Tibial artery (tissue), 4 donors: ENCODE measurements at regions of chr16 and their contacts with region 1.

Region 1: GRCh38 chr16:79601931-79602627 is 1.5 kb upstream of the MAF start:
- DNase-seq: peak; percentile 83 to 85
- H3K4me3 ChIP-seq: peak overlapping the region; percentile 63 to 78
- H3K27ac ChIP-seq: peak overlapping the region; percentile 83 to 91
- H3K4me1 ChIP-seq: peaks cover 0 to 18% (median 2%) of the 10 kb centered on the region in 4 donors
- H3K27me3 ChIP-seq: no peaks in the 10 kb centered on the region
- CTCF ChIP-seq: peak; percentile 70 to 73

Region 2: DNA sequence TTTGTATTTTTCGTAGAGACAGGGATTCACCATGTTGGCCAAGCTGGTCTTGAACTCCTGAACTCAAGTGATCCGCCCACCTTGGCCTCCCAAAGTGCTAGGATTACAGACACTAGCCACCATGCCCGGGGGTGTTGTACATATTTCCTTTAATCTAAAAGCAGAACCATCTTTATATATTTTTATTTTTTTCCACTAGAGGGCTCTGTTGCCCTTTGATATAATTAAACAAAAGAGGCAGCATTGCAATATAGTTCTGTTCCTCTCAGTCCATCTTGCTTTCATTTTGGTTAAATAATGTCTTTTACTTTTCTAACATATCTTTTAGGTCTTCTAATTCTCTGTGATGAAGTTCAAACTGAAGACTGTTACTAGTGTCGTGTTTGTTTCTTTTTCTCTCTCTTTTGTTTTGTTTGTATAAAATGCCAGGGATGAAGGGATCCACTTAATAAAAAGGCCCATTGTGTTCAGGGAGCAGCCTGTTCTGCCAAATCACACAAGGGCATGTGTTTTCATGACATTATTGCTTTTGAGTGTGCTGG is 1479.2 kb before region 1 on chr16:
- intact Hi-C with region 1: loop called (anchors 10 kb)
- DNase-seq: no peak
- H3K4me3 ChIP-seq: peak overlapping the region in 1 of 2 donors; percentile 17
- H3K27ac ChIP-seq: peak overlapping the region; percentile 39 to 51
- H3K4me1 ChIP-seq: peaks cover 0 to 17% (median 12%) of the 10 kb centered on the region in 4 donors
- H3K27me3 ChIP-seq: no peaks in the 10 kb centered on the region
- CTCF ChIP-seq: peak; percentile 46 to 68

Region 3: DNA sequence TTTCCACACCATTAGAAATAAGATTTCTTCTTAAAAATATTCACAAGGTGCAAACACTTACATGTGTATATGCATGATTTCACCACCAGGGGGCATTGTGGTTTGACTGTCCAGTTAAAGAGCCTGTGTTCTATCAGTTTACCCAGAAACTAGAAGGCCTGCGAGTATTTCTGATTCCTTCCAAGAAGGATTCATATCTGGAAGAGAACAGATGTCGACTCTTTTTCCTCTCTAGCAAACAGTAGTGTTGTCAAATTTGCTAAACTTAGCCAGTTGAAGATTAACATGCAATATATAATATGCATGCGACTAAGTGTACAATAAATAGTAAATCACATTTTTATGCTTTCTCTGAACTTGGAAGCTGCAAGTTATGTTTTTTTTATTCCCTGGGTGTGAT is 1098.5 kb before region 1 on chr16:
- intact Hi-C with region 1: loop called (anchors 5 kb)
- DNase-seq: peak in 1 of 2 donors; percentile 41
- H3K4me3 ChIP-seq: no peak overlapping the region
- H3K27ac ChIP-seq: no peak overlapping the region
- H3K4me1 ChIP-seq: peaks cover 0 to 28% (median 18%) of the 10 kb centered on the region in 4 donors
- H3K27me3 ChIP-seq: no peaks in the 10 kb centered on the region
- CTCF ChIP-seq: peak; percentile 70 to 89

Region 4: DNA sequence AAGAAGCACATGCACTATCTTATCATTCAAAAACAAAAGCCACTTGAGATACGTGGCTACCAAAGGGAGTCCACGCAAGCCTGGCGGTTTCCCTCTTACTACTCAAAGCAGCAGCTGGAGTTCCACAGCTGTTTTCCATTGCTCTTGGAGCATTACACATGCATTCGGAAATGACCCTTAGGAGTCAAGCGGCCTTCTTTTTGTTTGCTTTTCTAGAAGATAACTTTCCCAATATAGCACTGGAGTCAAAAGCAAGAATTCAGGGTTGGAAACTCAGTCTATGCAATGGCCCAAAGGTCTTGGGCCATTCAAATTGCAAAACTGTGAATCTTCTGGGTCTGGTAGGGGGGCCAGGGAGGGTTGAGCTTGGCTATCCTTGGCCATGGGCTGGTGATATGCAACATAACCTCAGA is 96.3 kb after region 1 on chr16:
- intact Hi-C with region 1: no loop called
- DNase-seq: peak in 1 of 2 donors; percentile 50
- H3K4me3 ChIP-seq: no peak overlapping the region
- H3K27ac ChIP-seq: peak overlapping the region in 1 of 2 donors; percentile 10
- H3K4me1 ChIP-seq: peaks cover 0 to 20% (median 9%) of the 10 kb centered on the region in 4 donors
- H3K27me3 ChIP-seq: no peaks in the 10 kb centered on the region
- CTCF ChIP-seq: no peak

Region 5: GRCh38 chr16:79713609-79714309 is 111.7 kb after region 1 on chr16:
- intact Hi-C with region 1: loop called (anchors 5 kb)
- DNase-seq: no peak
- H3K4me3 ChIP-seq: no peak overlapping the region
- H3K27ac ChIP-seq: peak overlapping the region; percentile 70 to 83
- H3K4me1 ChIP-seq: peaks cover 5 to 60% (median 41%) of the 10 kb centered on the region in 4 donors
- H3K27me3 ChIP-seq: no peaks in the 10 kb centered on the region
- CTCF ChIP-seq: no peak

Region 6: GRCh38 chr16:79767421-79768275 is 165.6 kb after region 1 on chr16:
- intact Hi-C with region 1: loop called (anchors 5 kb)
- DNase-seq: peak in 1 of 2 donors; percentile 19
- H3K4me3 ChIP-seq: peak overlapping the region; percentile 41 to 44
- H3K27ac ChIP-seq: peak overlapping the region; percentile 73 to 79
- H3K4me1 ChIP-seq: peaks cover 0 to 32% (median 18%) of the 10 kb centered on the region in 4 donors
- H3K27me3 ChIP-seq: no peaks in the 10 kb centered on the region
- CTCF ChIP-seq: no peak

Region 7: GRCh38 chr16:79826732-79827475 is 224.8 kb after region 1 on chr16:
- intact Hi-C with region 1: no loop called
- DNase-seq: no peak
- H3K4me3 ChIP-seq: no peak overlapping the region
- H3K27ac ChIP-seq: no peak overlapping the region
- H3K4me1 ChIP-seq: no peaks in the 10 kb centered on the region
- H3K27me3 ChIP-seq: no peaks in the 10 kb centered on the region
- CTCF ChIP-seq: no peak